ENCODE measurements at regions of chr6 and their contacts with region 1.

Region 1: GRCh38 chr6:52108128-52108527 is 20.7 kb upstream of the PKHD1 start:
- DNase-seq: no peak
- H3K4me3 ChIP-seq: no peak overlapping the region
- H3K27ac ChIP-seq: no peak overlapping the region
- H3K4me1 ChIP-seq: no peaks in the 10 kb centered on the region
- H3K27me3 ChIP-seq: no peaks in the 10 kb centered on the region
- CTCF ChIP-seq: no peak
- POLR2A ChIP-seq: no peak

Region 2: DNA sequence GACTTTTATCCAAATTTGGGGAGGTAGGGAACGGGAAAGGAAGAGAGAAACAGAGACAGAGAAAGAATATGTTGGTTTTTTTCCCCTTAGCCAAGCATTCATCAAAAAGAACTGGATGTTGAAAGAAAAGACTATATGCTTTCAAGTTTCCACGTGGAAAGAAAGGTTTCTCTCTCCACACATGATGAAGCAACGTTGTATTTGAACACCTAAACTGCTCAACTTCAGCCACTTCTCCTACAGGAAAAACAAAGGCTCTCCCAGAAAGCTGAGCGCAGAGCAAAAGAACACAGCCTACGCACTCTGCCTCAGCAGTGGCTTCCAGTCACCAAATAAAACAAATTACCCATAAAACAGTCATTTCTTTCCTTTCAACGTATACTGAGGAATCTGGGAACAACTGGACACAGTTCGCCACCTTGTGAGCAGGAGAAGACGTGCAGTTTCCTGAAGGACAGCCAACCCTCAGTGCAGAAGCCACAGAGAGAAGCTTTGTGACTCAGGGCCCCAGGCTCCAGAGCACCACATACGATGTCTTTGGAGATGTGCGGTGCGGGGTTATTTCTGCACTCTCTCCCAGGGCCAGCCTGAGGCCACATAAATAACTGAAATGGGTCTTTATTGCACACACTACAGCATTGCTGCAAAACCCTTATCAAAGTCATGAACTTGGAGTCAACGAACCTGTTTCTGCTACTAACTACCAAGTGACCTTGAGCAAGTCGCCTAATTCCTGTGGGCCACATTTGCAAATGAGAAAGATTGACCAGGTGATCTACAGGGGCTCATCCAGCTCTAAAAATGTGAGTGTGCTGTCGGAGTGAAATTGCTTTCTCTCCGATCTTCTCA is 126.1 kb after region 1 on chr6:
- intact Hi-C with region 1: loop called (anchors 10 kb)
- DNase-seq: peak; percentile 6
- H3K4me3 ChIP-seq: no peak overlapping the region
- H3K27ac ChIP-seq: no peak overlapping the region
- H3K4me1 ChIP-seq: no peaks in the 10 kb centered on the region
- H3K27me3 ChIP-seq: no peaks in the 10 kb centered on the region
- CTCF ChIP-seq: peak in 3 of 4 experiments; percentile 30 to 51 (median 40)
- POLR2A ChIP-seq: no peak

Region 3: DNA sequence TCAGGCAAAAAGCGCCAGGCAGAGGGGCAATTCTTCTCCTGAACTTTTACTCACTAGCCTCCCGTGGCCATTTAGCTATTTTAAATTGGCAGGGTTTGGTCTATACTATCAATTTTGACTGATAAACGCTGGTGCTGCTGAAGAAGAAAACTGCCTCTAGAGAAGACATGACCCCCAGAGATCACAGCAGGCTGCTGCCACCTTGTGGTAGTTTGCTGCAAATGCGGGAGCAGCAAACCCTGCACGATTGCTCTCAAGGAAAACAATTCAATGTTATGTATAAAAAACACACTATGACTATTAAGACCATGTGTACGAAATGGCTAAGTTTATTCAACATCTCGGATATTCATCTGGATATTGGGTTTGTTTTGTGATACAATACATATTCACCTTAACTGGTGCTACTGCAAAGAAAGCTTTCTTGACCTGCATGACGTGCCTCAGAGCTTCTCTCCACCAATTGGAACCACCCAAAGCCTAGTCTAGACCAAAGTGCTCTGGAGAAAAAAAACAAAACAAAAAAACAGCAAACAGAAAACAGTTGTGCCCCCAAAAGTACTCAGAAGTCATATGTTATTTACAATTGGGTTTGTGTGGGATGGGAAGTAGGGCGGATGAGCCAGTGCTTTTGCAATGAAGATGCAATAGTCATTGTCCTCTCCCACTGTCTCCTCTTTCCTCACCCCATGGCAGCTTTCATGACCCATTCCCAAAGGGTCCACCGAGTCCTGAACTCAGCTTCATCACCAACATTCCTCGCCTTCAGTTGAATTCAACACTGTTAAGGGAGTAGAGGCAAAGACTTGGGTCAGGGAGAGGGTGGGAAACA is 155.8 kb after region 1 on chr6:
- intact Hi-C with region 1: loop called (anchors 10 kb)
- DNase-seq: peak; percentile 21
- H3K4me3 ChIP-seq: no peak overlapping the region
- H3K27ac ChIP-seq: no peak overlapping the region
- H3K4me1 ChIP-seq: no peaks in the 10 kb centered on the region
- H3K27me3 ChIP-seq: no peaks in the 10 kb centered on the region
- CTCF ChIP-seq: peak; percentile 29 to 73 (median 68)
- POLR2A ChIP-seq: no peak